Activated CD8-positive, alpha-beta T cell treated with anti-CD3 and anti-CD28 coated beads for 36 hours (primary cell): ENCODE measurements at regions of chr6 and their contacts with region 1.

Region 1: GRCh38 chr6:5143634-5144311 is 58.6 kb downstream of the PPP1R3G start:
- DNase-seq: peak; percentile 94
- ATAC-seq: peak; percentile 66
- H3K4me3 Mint-ChIP-seq: no peak overlapping the region
- H3K27ac Mint-ChIP-seq: no peak overlapping the region
- H3K4me1 Mint-ChIP-seq: no peaks in the 10 kb centered on the region
- H3K27me3 Mint-ChIP-seq: no peaks in the 10 kb centered on the region
- CTCF ChIP-seq: peak; percentile 90

Region 2: GRCh38 chr6:5132731-5133341 is 10.9 kb before region 1 on chr6:
- CTCF ChIA-PET with region 1: interaction called, 22 read pairs
- POLR2A ChIA-PET with region 1: no interaction called
- intact Hi-C with region 1: no loop called
- DNase-seq: no peak
- ATAC-seq: no peak
- H3K4me3 Mint-ChIP-seq: no peak overlapping the region
- H3K27ac Mint-ChIP-seq: no peak overlapping the region
- H3K4me1 Mint-ChIP-seq: peaks cover 3% of the 10 kb centered on the region
- H3K27me3 Mint-ChIP-seq: no peaks in the 10 kb centered on the region
- CTCF ChIP-seq: no peak

Region 3: GRCh38 chr6:5174244-5174643 is 30.5 kb after region 1 on chr6:
- CTCF ChIA-PET with region 1: interaction called, 57 read pairs
- POLR2A ChIA-PET with region 1: interaction called, 3 read pairs
- intact Hi-C with region 1: no loop called
- DNase-seq: peak; percentile 85
- ATAC-seq: peak; percentile 97
- H3K4me3 Mint-ChIP-seq: peak overlapping the region; percentile 44
- H3K27ac Mint-ChIP-seq: peak overlapping the region; percentile 79
- H3K4me1 Mint-ChIP-seq: peaks cover 49% of the 10 kb centered on the region
- H3K27me3 Mint-ChIP-seq: no peaks in the 10 kb centered on the region
- CTCF ChIP-seq: no peak

Region 4: GRCh38 chr6:5192135-5192794 is 48.5 kb after region 1 on chr6:
- CTCF ChIA-PET with region 1: interaction called, 13 read pairs
- POLR2A ChIA-PET with region 1: no interaction called
- intact Hi-C with region 1: no loop called
- DNase-seq: no peak
- ATAC-seq: no peak
- H3K4me3 Mint-ChIP-seq: no peak overlapping the region
- H3K27ac Mint-ChIP-seq: no peak overlapping the region
- H3K4me1 Mint-ChIP-seq: no peaks in the 10 kb centered on the region
- H3K27me3 Mint-ChIP-seq: no peaks in the 10 kb centered on the region
- CTCF ChIP-seq: no peak

Region 5: DNA sequence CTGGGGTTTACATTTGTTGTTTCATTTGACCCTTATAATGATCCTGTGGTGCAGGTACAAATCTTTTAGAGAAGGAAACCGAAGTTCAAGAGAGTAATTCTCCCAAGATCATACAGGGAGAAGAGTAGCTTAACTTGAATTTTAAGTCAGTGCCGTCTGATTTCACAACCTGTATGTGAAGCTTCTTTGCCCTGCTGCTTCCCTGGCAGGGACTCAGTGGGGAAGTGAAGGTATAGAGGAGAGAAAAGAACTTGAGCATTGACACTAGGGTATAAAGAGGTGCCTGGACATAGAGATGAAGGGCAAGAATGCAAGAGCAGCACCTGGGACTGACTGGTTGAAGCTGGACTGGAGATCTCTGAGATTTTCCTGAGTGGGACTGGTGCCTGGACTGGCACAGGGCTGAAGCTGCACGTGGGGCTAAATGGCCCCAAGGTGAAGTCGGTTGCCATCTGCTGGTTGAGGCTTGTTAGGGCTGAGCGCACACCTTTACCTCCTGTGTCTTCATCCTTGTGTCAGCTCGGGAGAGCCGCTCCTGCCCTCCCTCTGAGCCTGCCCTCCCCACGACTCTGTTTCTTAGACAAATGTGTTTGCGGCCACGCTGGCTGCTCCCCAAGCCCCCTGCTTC is 159.3 kb after region 1 on chr6:
- CTCF ChIA-PET with region 1: interaction called, 48 read pairs
- POLR2A ChIA-PET with region 1: no interaction called
- intact Hi-C with region 1: loop called (anchors 2 kb)
- DNase-seq: peak; percentile 74
- ATAC-seq: peak; percentile 64
- H3K4me3 Mint-ChIP-seq: peak overlapping the region; percentile 44
- H3K27ac Mint-ChIP-seq: peak overlapping the region; percentile 78
- H3K4me1 Mint-ChIP-seq: peaks cover 52% of the 10 kb centered on the region
- H3K27me3 Mint-ChIP-seq: no peaks in the 10 kb centered on the region
- CTCF ChIP-seq: peak; percentile 46

Region 6: DNA sequence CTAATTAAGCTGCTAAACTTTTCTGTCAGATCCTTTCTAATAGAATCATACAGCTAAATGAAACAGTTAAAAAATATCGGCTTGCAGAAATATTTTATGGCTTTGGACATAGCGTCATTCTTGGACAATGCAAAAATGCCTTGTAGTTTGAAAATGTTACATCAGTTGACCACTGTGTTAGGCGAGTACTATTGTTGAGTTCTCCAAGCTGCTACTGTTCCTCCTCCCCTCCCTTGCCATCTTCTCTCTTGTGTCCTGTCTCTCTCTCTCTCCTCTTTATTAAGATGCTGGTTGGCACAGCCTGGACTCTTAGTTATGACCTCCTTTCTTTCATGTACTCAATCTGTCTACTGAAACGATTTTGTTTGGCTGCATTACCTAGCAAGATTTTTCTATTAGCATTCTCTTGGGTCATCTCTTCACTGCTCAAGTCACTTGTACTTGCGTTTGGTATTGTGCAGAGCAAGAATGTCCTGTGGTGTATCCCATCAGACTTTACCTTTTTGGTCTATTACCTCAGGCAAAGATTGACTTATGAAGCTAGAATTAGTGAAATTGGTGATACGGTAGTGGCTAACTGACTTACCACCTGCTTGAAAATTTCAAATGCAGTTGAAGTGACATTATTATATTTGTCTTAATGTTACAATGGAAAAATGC is 245.4 kb after region 1 on chr6:
- CTCF ChIA-PET with region 1: interaction called, 17 read pairs
- POLR2A ChIA-PET with region 1: no interaction called
- intact Hi-C with region 1: loop called (anchors 5 kb)
- DNase-seq: no peak
- ATAC-seq: no peak
- H3K4me3 Mint-ChIP-seq: no peak overlapping the region
- H3K27ac Mint-ChIP-seq: no peak overlapping the region
- H3K4me1 Mint-ChIP-seq: peaks cover 3% of the 10 kb centered on the region
- H3K27me3 Mint-ChIP-seq: no peaks in the 10 kb centered on the region
- CTCF ChIP-seq: no peak

Region 7: DNA sequence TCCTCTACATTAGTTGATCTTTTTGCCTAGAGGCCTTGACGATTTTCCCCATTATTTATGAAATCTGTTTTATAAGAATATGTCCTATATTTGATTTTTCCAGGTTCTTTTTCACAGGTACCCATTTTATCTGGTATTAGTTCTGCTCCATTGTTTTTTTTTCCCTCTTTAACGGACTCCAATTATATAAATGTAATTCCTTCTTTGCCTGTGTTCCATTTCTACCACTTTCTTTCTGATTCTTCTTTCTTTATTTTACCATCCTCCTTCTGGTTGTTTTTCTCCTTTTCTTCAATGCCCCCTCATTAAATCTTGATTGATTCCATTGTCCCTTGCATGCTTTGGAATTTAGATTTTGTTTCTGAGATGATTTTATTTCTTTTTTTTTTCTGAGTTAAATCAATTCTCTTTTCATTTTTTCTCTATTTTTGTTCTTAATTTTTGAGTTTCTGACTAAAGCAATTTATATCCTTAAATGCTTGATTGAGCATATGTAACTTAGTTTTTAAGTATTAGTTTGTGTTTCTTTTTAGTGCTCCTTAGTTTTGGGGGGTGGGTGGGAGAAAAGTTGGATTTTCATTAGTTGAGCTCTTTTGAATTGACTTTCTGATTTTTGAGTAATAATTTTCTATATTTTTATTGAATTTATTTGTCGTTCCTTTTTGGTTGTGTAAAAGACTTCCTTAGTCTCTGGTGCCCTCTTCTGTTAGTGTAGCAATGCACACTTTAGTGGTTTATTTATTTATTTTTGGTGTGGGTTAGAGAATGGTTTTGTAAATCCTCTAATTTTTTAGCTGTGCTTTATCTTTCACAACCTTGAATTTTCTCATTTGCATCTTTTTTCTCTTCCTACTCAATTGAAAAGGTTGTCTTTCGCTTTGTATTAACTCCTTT is 258.3 kb after region 1 on chr6:
- CTCF ChIA-PET with region 1: interaction called, 38 read pairs
- POLR2A ChIA-PET with region 1: no interaction called
- intact Hi-C with region 1: loop called (anchors 5 kb)
- DNase-seq: no peak
- ATAC-seq: no peak
- H3K4me3 Mint-ChIP-seq: no peak overlapping the region
- H3K27ac Mint-ChIP-seq: no peak overlapping the region
- H3K4me1 Mint-ChIP-seq: peaks cover 21% of the 10 kb centered on the region
- H3K27me3 Mint-ChIP-seq: no peaks in the 10 kb centered on the region
- CTCF ChIP-seq: peak; percentile 64